AG04449 (cell line): ENCODE measurements at regions of chr19 and their contacts with region 1.

Region 1: GRCh38 chr19:47124937-47125668 is 5.5 kb upstream of the SAE1 start:
- DNase-seq: no peak
- H3K4me3 ChIP-seq: no peak overlapping the region
- CTCF ChIP-seq: peak; percentile 34

Region 2: DNA sequence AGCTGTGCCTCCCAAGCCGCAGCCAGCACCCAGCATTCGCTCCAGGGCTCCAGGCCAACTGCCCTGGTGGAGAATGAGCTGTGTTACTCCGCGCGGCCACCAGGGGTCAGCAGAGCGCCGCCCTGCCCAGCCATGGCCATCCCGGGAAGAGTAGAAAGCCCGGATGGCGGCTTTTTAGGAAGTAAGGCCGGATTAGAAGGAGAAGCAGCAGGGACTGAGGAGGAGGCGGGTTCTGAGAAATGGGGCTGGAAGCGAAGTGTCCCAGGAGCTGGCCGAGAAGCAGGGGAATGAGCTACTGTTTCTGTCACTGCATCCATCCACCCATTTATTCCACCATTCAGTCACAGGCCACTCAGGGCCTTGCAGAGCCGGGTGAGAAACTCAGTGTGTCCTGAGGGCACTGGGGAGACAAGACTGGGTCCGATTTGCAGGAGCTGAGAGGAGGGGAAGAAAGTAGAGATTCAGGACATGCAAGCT is 112.0 kb before region 1 on chr19:
- CTCF ChIA-PET with region 1: interaction called, 42 read pairs
- POLR2A ChIA-PET with region 1: no interaction called
- DNase-seq: no peak
- H3K4me3 ChIP-seq: no peak overlapping the region
- CTCF ChIP-seq: peak; percentile 97

Region 3: GRCh38 chr19:47035127-47036096 is 89.7 kb before region 1 on chr19:
- CTCF ChIA-PET with region 1: interaction called, 46 read pairs
- POLR2A ChIA-PET with region 1: interaction called, 4 read pairs
- DNase-seq: no peak
- H3K4me3 ChIP-seq: peak overlapping the region; percentile 57
- CTCF ChIP-seq: peak; percentile 98

Region 4: GRCh38 chr19:47075179-47075810 is 49.8 kb before region 1 on chr19:
- CTCF ChIA-PET with region 1: interaction called, 50 read pairs
- POLR2A ChIA-PET with region 1: no interaction called
- DNase-seq: no peak
- H3K4me3 ChIP-seq: no peak overlapping the region
- CTCF ChIP-seq: no peak

Region 5: DNA sequence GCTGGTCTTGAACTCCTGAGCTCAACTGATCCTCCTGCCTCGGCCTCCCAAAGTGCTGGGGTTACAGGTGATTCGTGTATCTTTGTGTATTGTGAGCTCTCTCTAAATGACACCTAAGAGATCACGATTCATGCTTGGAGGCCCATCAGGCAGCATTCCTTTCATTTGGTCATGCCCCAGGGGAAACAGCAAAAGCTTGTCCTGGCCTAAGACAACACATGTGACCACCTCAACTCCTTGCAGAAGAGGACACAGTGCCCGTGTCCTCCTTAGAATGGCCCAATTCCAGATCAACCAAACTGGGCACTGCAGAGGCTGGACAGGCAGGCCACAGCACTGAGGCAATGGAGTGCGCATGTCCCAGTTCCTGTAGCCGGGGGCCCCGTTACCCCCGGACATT is 44.0 kb before region 1 on chr19:
- CTCF ChIA-PET with region 1: interaction called, 50 read pairs
- POLR2A ChIA-PET with region 1: no interaction called
- DNase-seq: no peak
- H3K4me3 ChIP-seq: no peak overlapping the region
- CTCF ChIP-seq: no peak

Region 6: GRCh38 chr19:47112997-47113849 is 11.9 kb before region 1 on chr19 and contains the start of gene ZC3H4:
- CTCF ChIA-PET with region 1: interaction called, 22 read pairs
- POLR2A ChIA-PET with region 1: interaction called, 10 read pairs
- DNase-seq: peak; percentile 95
- H3K4me3 ChIP-seq: peak within 1 kb of the TSS; percentile 86
- CTCF ChIP-seq: no peak

Region 7: DNA sequence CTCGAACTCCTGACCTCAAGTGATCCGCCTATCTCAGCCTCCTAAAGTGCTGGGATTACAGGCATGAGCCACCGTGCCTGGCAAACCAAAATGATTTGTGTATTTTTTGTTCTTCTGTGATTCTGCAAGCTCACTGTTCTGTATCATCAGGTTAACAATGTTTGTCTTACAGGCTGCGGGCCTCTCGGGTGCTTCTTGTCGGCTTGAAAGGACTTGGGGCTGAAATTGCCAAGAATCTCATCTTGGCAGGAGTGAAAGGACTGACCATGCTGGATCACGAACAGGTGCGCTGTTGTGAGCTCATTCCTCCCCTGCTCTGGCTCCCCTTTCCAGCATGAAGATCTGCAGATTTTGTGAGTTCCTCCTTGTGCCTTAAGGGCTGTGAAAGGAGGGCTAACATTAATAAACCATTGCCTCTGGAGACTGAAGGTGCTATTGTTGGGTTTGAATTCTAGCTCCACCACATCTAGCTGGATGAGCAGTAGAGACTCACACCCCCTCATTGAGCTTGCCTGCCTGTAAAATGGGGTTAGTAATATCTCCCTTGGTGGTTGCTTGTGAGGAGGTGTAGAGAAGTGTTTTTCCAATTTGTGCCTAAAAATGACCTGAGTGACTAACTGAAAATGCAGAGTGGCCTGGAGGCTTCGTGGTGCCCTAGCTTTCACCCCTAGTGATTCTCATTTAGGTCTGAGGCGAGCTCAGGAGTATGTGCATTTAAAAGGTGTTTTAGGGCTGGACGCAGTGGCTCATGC is 18.4 kb after region 1 on chr19:
- CTCF ChIA-PET with region 1: interaction called, 11 read pairs
- POLR2A ChIA-PET with region 1: no interaction called
- DNase-seq: no peak
- H3K4me3 ChIP-seq: no peak overlapping the region
- CTCF ChIP-seq: no peak

Region 8: GRCh38 chr19:47183601-47184000 is 58.5 kb after region 1 on chr19:
- CTCF ChIA-PET with region 1: no interaction called
- POLR2A ChIA-PET with region 1: no interaction called
- DNase-seq: no peak
- H3K4me3 ChIP-seq: no peak overlapping the region
- CTCF ChIP-seq: no peak

Region 9: GRCh38 chr19:47195434-47195833 is 70.3 kb after region 1 on chr19:
- CTCF ChIA-PET with region 1: no interaction called
- POLR2A ChIA-PET with region 1: no interaction called
- DNase-seq: no peak
- H3K4me3 ChIP-seq: no peak overlapping the region
- CTCF ChIP-seq: no peak